Activated naive CD4-positive, alpha-beta T cell treated with anti-CD3 and anti-CD28 coated beads for 36 hours (primary cell): ENCODE measurements at regions of chr3 and their contacts with region 1.

Region 1: DNA sequence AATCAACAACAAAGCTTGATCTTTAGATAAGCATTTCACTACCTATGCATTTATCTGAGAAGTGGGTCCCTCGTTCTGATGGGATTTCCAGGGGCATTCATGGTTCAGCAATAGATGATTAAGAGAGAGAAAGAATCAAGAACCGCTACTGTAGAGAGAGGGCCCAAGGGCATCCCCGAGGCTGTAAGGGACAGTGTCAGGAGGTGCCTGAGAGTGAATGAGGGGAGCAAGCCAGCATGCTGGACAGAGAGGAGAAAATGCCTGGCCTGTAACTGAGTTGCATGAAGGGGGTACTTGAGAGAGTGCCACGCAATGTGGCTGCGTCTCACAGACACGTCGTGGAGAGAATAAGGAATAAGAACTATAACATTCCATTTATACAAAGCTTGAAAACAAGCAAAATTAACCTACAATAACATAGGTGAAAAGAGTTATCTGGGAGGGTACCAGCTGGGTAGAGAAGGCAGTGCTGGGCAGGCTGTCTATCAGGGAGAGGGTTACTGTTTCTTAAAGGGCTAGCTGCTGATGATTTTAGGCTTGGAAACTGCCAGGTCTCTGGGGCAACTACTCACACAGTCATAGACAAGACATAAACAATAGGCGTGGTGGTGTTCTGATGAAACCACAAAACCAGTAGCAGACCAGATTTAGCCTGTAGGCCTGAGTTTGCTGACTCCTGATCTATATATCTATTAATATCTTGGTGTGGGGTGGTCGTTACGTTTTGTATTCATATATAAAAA is 374.6 kb upstream of the CFAP20DC start:
- DNase-seq: peak; percentile 34
- H3K4me3 Mint-ChIP-seq: no peak overlapping the region
- H3K27ac Mint-ChIP-seq: no peak overlapping the region
- H3K4me1 Mint-ChIP-seq: peaks cover 68% of the 10 kb centered on the region
- H3K27me3 Mint-ChIP-seq: peaks cover 4% of the 10 kb centered on the region

Region 2: DNA sequence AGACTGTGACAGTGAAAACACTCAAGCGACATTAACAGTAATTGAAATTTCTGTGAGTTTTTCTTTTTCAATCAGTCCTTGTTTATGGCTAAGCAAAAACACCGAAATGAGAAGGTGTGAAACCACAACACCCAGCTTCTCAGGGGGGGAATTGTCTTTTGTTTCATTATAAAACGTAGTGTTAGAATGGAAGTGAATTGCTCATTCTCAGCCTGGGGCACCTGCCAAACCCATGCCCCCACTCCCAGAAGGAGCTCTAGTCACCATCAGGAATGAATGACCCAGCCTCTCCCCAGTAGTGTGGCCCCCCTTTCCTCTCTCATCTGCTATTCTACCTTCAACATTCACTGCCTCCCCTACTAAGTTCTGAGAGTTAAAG is 188.8 kb before region 1 on chr3:
- CTCF ChIA-PET with region 1: no interaction called
- intact Hi-C with region 1: loop called (anchors 1 kb)
- DNase-seq: peak; percentile 74
- H3K4me3 Mint-ChIP-seq: no peak overlapping the region
- H3K27ac Mint-ChIP-seq: no peak overlapping the region
- H3K4me1 Mint-ChIP-seq: peaks cover 8% of the 10 kb centered on the region
- H3K27me3 Mint-ChIP-seq: no peaks in the 10 kb centered on the region

Region 3: DNA sequence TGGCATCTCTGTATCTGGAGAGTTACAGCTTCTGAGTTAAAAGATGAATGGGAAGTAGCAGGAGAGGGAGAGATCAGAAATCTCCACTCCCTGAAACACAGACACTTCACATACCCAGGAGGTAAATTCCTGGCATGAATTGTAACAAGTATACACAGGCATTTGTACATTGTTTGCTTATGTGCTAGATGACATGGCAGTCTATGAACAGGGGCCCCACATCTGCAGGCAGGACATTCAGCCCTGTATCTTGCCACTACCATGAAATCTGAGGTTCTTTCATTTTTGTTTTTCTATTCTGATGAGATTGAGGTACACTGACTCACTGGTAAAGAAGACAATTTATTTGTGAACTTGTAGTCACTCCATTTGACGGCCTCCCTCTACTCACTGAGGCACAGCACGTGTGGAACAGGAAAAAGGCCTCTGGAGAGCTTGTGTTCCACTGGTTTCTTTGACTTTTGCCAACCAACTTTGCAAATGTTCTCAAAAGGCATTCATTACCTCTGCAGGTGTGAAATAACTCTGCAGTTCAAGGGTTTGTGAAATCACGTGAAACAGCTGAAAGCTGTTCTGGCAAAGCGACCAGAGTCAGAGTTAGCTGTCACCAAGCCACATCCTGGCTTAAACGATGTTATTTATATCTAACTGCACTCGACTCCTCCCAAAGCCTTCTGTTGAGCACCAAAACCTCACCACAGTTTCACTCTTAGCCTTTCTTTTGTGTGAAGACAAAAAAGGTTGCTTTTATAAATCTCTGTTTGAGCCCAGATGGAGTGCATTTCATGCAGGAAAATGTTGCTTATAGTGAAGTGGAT is 26.7 kb after region 1 on chr3:
- CTCF ChIA-PET with region 1: interaction called, 3 read pairs
- intact Hi-C with region 1: loop called (anchors 1 kb)
- DNase-seq: peak; percentile 79
- H3K4me3 Mint-ChIP-seq: peak overlapping the region; percentile 41
- H3K27ac Mint-ChIP-seq: peak overlapping the region; percentile 94
- H3K4me1 Mint-ChIP-seq: peaks cover 70% of the 10 kb centered on the region
- H3K27me3 Mint-ChIP-seq: no peaks in the 10 kb centered on the region

Region 4: DNA sequence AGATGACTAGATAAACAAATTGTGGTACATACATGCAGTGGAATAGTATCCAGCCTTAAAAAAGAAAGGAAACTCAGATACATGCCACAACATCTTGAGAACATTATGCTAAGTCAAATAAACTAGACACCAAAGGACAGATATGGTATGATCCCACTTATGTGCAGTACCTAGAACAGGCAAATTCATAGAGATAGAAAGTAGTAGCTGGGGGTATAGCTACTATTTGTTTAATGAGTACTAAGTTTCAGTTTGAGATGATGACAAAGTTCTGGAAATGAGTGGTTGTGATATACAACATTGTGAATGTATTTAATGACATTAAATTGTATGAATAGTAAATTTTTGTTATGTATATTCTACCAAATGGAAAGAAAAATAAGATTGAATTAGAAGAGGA is 102.6 kb after region 1 on chr3:
- CTCF ChIA-PET with region 1: no interaction called
- intact Hi-C with region 1: loop called (anchors 1 kb)
- DNase-seq: no peak
- H3K4me3 Mint-ChIP-seq: no peak overlapping the region
- H3K27ac Mint-ChIP-seq: no peak overlapping the region
- H3K4me1 Mint-ChIP-seq: peaks cover 15% of the 10 kb centered on the region
- H3K27me3 Mint-ChIP-seq: peaks cover 2% of the 10 kb centered on the region

Region 5: GRCh38 chr3:59595830-59596229 is 171.4 kb after region 1 on chr3:
- CTCF ChIA-PET with region 1: no interaction called
- intact Hi-C with region 1: no loop called
- DNase-seq: no peak
- H3K4me3 Mint-ChIP-seq: no peak overlapping the region
- H3K27ac Mint-ChIP-seq: no peak overlapping the region
- H3K4me1 Mint-ChIP-seq: no peaks in the 10 kb centered on the region
- H3K27me3 Mint-ChIP-seq: no peaks in the 10 kb centered on the region

Region 6: GRCh38 chr3:59759298-59760031 is 335.0 kb after region 1 on chr3:
- CTCF ChIA-PET with region 1: no interaction called
- intact Hi-C with region 1: loop called (anchors 10 kb)
- DNase-seq: peak; percentile 55
- H3K4me3 Mint-ChIP-seq: no peak overlapping the region
- H3K27ac Mint-ChIP-seq: no peak overlapping the region
- H3K4me1 Mint-ChIP-seq: peaks cover 86% of the 10 kb centered on the region
- H3K27me3 Mint-ChIP-seq: no peaks in the 10 kb centered on the region

Region 7: GRCh38 chr3:60017631-60018030 is 593.2 kb after region 1 on chr3:
- CTCF ChIA-PET with region 1: no interaction called
- intact Hi-C with region 1: loop called (anchors 1 kb)
- DNase-seq: peak; percentile 86
- H3K4me3 Mint-ChIP-seq: peak overlapping the region; percentile 74
- H3K27ac Mint-ChIP-seq: peak overlapping the region; percentile 100
- H3K4me1 Mint-ChIP-seq: peaks cover 82% of the 10 kb centered on the region
- H3K27me3 Mint-ChIP-seq: no peaks in the 10 kb centered on the region